HEK293T (cell line): ENCODE measurements at regions of chr5 and their contacts with region 1.

Region 1: DNA sequence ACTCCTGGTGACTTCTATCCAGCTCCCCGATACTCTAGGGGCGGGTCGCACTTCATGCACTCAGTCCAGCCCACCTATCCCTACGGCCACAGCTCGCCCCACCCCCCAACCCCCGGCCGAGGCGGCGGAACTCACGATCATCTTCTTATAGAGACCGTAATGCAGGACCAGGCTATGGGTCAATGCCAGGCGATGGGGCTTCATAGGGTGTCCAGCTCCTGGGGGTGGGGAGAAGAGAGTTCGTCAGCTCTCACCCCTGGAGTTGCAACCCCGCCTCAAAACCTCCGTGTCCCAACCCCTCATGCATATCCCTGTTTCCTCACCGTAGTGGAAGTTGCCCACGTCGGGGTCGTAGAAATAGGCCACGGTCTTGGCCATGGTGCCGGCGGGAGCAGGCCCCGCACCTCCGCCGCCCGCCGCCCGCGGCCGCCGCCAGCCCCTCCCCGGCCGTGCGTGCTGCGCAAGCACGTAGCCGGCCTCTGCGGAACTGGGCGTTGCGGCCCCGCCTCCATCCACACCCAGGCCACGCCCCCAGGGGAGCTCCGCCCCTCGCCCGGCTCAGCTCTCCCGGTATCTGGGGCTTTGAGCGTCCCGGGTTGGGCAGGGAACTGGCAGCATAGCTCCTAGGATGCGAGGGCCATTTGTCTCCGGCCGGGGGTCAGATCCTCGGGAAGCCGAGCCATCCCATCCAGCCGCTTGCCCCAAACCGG is at the starts of genes HDAC3 and RELL2:
- DNase-seq: peak; percentile 98

Region 2: DNA sequence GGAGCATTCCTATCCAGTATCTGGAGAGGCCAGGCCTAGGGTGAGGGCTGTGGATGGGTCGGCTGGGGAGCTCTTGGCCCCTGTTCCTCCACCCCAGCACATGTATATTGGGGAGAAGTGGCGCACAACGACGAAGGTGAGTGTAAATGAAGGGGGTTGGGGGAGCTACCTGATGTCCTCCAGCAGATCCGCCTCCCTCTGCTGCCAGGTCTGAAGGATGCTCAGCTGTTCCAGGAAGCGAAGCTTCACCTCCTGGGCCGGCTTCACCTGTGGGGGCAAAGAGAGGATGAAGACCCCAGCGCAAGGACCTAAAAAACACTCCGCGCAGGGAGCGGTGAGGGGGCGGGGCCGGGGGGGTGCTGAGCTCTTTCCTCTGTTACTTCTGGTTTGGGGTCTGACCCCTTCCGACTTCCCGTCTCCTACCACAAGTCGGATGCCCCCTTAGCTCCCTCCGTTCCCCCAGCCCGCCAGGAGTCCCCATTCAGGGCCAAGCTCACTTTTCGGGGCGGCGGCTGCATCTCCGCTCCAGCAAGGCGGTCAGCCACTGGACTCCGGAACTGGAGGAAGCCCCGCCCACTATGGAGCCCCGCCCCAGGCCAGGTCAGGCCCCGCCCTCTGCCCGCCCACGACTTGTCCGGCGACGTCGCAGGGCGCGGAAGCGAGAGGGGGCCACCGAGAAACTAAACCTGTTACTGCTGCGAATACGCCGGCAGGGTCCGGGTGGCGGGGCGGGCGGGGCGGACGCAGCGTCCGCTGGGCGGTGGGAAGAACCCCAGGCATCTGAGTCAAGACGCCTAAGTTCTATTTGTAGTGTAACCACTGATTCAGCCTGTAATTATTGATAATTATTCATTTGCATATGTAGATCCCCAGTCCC is 14.5 kb after region 1 on chr5 and contains the start of gene FCHSD1:
- CTCF ChIA-PET with region 1: interaction called, 5 read pairs
- POLR2A ChIA-PET with region 1: interaction called, 27 read pairs
- DNase-seq: peak; percentile 98